ENCODE measurements at regions of chr10 and their contacts with region 1.

Region 1: DNA sequence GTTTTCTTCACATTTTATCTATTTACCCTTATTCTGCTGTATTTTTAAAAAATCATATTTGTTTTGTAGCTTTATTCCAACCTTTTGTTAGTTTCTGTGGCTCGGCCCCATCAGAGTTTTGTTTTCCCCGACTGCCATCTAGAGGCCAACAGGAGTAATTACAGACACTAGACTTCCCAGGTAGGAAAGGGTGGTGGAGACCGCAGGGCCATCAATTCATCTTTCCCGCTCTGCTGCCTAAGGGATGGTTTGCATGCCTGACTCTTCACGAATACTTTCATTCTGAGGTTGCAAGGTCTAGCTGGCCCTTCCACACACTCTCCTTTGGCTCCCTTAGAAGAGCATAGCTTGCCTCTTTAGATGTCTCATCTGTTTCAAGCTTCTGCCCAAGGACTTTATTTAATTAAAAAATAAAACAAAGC is 38.3 kb downstream of the LYZL2 start:
- DNase-seq: no peak
- ATAC-seq: peak; percentile 41
- H3K4me3 ChIP-seq: no peak overlapping the region
- H3K27ac ChIP-seq: no peak overlapping the region
- H3K4me1 ChIP-seq: peaks cover 16% of the 10 kb centered on the region
- H3K27me3 ChIP-seq: no peaks in the 10 kb centered on the region
- CTCF ChIP-seq: peak; percentile 66 to 78 (median 72)
- EP300 ChIP-seq: no peak
- POLR2A ChIP-seq: no peak
- RAD21 ChIP-seq: peak; percentile 95

Region 2: DNA sequence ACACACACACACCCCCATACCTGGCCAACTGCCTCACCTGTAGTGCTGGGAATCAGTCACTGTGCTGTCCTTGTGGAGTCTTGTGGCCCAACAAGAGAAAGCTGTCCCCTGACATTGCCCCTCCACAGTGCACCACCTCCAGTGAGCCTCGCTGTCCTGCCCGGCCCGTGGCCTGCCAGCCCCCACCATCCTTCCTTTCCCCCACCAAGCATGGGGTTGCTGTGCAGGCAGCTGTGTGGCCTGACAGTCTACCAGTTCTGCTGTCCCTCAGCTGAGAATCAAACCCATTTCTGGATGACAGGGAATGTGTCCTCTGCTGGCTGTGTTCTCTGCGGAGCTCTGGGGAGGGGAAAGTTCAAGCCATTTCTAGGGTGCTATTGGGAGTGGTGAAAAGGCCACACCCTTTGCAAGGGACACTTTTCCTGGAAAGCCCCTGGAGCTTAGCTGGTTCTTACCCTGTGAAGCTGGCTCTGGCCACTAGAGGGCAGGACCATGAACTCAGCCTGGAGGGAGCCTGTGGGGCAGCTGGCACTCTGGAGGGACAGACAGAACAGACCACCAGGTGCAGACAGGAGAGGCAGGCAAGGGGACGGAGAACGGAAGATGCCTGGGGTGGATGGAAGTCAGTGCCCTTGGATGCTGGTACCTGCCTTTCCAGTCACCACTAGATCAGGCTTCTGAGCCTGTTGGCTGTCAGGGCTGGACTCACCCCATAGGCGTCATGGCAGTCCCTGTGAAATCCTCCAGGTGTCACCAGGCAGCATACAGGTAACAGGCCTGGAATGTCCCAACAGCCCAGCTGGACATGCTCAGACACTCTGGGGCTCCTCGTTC is 231.7 kb before region 1 on chr10:
- CTCF ChIA-PET with region 1: interaction called, 142 read pairs
- POLR2A ChIA-PET with region 1: no interaction called
- RAD21 ChIA-PET with region 1: interaction called, 31 read pairs
- SMC1A ChIA-PET with region 1: interaction called, 31 read pairs
- in situ Hi-C with region 1: no loop called
- intact Hi-C with region 1: no loop called
- DNase-seq: peak; percentile 39
- ATAC-seq: peak; percentile 97
- H3K4me3 ChIP-seq: no peak overlapping the region
- H3K27ac ChIP-seq: no peak overlapping the region
- H3K4me1 ChIP-seq: peaks cover 4% of the 10 kb centered on the region
- H3K27me3 ChIP-seq: no peaks in the 10 kb centered on the region
- CTCF ChIP-seq: peak; percentile 72 to 98 (median 95)
- EP300 ChIP-seq: no peak
- POLR2A ChIP-seq: no peak
- RAD21 ChIP-seq: peak; percentile 53

Region 3: DNA sequence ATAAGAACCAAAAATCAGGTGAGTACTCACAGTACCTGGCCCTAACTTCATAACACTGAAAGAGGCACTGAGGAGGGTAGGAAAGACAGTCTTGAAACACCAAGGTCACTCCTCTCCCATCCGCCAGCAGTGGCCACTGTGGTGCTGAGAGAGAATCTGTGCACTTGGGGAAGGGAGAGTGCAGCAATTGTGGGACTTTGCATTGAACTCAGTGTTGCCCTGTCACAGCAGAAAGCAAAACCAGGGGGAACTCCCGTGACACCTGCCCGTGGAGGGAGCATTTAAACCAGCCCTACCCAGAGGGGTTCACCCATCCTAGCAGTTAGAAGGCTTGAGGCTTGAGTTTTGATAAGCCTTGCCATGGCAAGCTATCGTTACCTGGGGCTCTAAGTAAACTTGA is 192.5 kb before region 1 on chr10:
- CTCF ChIA-PET with region 1: interaction called, 221 read pairs
- POLR2A ChIA-PET with region 1: no interaction called
- RAD21 ChIA-PET with region 1: interaction called, 59 read pairs
- SMC1A ChIA-PET with region 1: interaction called, 68 read pairs
- in situ Hi-C with region 1: loop called (anchors 5 kb)
- intact Hi-C with region 1: no loop called
- DNase-seq: no peak
- ATAC-seq: peak; percentile 65
- H3K4me3 ChIP-seq: no peak overlapping the region
- H3K27ac ChIP-seq: no peak overlapping the region
- H3K4me1 ChIP-seq: peaks cover 9% of the 10 kb centered on the region
- H3K27me3 ChIP-seq: no peaks in the 10 kb centered on the region
- CTCF ChIP-seq: no peak
- EP300 ChIP-seq: no peak
- POLR2A ChIP-seq: no peak
- RAD21 ChIP-seq: no peak

Region 4: DNA sequence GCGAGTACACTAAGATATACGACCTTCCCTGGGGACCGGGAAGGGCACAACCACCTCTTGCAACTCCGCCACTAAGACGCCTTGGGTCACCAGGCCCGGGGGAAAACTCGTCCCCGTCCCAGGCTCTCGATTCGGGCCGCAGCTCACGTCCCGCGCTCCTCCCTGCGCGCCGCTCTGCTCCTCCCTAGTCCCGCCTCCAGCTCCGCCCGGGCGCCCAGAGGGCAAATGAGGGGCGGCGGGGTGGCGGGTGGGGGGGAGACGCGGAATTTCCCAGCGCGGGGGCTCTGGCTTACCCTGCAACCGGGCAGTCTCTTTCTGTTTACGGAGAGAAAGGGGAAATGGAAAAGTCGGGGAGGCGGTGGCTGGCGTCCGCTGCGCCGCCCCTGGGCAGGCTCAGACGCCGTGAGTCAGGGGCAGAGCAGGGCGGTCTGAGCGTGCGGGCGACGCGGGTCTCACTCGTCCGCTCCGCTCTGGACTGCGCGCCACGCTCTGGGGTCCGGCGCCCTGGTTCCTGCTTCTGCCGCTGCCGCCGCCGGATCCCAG is 157.5 kb before region 1 on chr10 and contains the start of gene MAP3K8:
- CTCF ChIA-PET with region 1: interaction called, 10 read pairs
- POLR2A ChIA-PET with region 1: interaction called, 3 read pairs
- RAD21 ChIA-PET with region 1: interaction called, 11 read pairs
- SMC1A ChIA-PET with region 1: interaction called, 10 read pairs
- in situ Hi-C with region 1: no loop called
- intact Hi-C with region 1: no loop called
- DNase-seq: peak; percentile 84
- ATAC-seq: peak; percentile 72
- H3K4me3 ChIP-seq: peak within 1 kb of the TSS; percentile 100
- H3K27ac ChIP-seq: peak within 1 kb of the TSS; percentile 91
- H3K4me1 ChIP-seq: peaks cover 25% of the 10 kb centered on the region
- H3K27me3 ChIP-seq: no peaks in the 10 kb centered on the region
- CTCF ChIP-seq: no peak
- EP300 ChIP-seq: no peak; a peak in 1 of 4 replicates
- POLR2A ChIP-seq: peak; percentile 82
- RAD21 ChIP-seq: 0 out of 2 replicates have a peak, but pooled peaks have one; percentile 11
- polyA plus RNA-seq, gene MAP3K8: 45.5 to 47.9 TPM

Region 5: GRCh38 chr10:30534465-30535144 is 56.7 kb before region 1 on chr10:
- CTCF ChIA-PET with region 1: interaction called, 49 read pairs
- POLR2A ChIA-PET with region 1: interaction called, 4 read pairs
- RAD21 ChIA-PET with region 1: interaction called, 21 read pairs
- SMC1A ChIA-PET with region 1: interaction called, 41 read pairs
- in situ Hi-C with region 1: no loop called
- intact Hi-C with region 1: loop called (anchors 2 kb)
- DNase-seq: no peak
- ATAC-seq: peak; percentile 56
- H3K4me3 ChIP-seq: no peak overlapping the region
- H3K27ac ChIP-seq: no peak overlapping the region
- H3K4me1 ChIP-seq: peaks cover 6% of the 10 kb centered on the region
- H3K27me3 ChIP-seq: no peaks in the 10 kb centered on the region
- CTCF ChIP-seq: peak; percentile 80 to 88 (median 84)
- EP300 ChIP-seq: no peak
- POLR2A ChIP-seq: no peak
- RAD21 ChIP-seq: peak; percentile 96

Region 6: GRCh38 chr10:30639946-30640786 is 48.9 kb after region 1 on chr10:
- CTCF ChIA-PET with region 1: interaction called, 11 read pairs
- POLR2A ChIA-PET with region 1: no interaction called
- RAD21 ChIA-PET with region 1: interaction called, 4 read pairs
- SMC1A ChIA-PET with region 1: interaction called, 5 read pairs
- in situ Hi-C with region 1: no loop called
- intact Hi-C with region 1: no loop called
- DNase-seq: no peak
- ATAC-seq: peak; percentile 37; the same call in 1 of the 3 replicates
- H3K4me3 ChIP-seq: no peak overlapping the region
- H3K27ac ChIP-seq: no peak overlapping the region
- H3K4me1 ChIP-seq: no peaks in the 10 kb centered on the region
- H3K27me3 ChIP-seq: peaks cover 0 to 1% of the 10 kb centered on the region in 2 experiments; a peak in 3 of 4 replicates
- CTCF ChIP-seq: peak; percentile 78 to 81 (median 81)
- EP300 ChIP-seq: no peak
- POLR2A ChIP-seq: no peak
- RAD21 ChIP-seq: peak; percentile 56